ENCODE measurements at regions of chr1 and their contacts with region 1.

Region 1: GRCh38 chr1:32714277-32714676 is 11.7 kb upstream of the SYNC start:
- DNase-seq: no peak
- ATAC-seq: peak in 1 of 4 donors; percentile 18
- H3K4me3 ChIP-seq: no peak overlapping the region
- H3K27ac ChIP-seq: no peak overlapping the region
- H3K4me1 ChIP-seq: peaks cover 0 to 4% (median 0%) of the 10 kb centered on the region in 4 donors
- H3K27me3 ChIP-seq: no peaks in the 10 kb centered on the region
- CTCF ChIP-seq: no peak
- POLR2A ChIP-seq: no peak

Region 2: DNA sequence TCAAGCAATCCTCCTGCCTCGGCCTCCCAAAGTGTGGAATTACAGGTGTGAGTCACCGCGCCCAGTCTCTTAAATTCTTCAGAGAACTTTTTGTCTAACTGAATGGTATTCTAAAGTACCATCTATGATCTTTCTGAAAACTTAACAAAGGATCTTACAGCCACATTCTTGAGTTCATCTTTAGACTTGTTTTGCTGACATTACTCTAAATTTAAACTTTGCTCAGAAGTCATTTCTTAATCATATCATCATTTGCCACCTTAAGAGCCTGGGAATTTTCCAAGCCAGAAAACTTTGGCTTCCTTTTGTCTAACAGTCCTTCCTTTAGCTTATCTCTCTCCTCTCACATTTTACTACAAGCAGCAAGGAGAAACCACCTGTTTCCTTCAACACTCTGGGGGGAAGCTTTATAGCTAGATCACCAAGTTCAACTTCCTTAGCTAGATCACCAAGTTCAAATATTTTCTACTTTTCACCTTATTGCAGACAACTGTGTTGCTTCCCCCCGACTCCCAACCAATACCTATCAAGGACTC is 180.4 kb before region 1 on chr1:
- intact Hi-C with region 1: no loop called
- DNase-seq: no peak
- ATAC-seq: peak in 2 of 4 donors; percentile 39 to 67
- H3K4me3 ChIP-seq: no peak overlapping the region
- H3K27ac ChIP-seq: no peak overlapping the region
- H3K4me1 ChIP-seq: no peaks in the 10 kb centered on the region
- H3K27me3 ChIP-seq: no peaks in the 10 kb centered on the region
- CTCF ChIP-seq: no peak
- POLR2A ChIP-seq: no peak

Region 3: DNA sequence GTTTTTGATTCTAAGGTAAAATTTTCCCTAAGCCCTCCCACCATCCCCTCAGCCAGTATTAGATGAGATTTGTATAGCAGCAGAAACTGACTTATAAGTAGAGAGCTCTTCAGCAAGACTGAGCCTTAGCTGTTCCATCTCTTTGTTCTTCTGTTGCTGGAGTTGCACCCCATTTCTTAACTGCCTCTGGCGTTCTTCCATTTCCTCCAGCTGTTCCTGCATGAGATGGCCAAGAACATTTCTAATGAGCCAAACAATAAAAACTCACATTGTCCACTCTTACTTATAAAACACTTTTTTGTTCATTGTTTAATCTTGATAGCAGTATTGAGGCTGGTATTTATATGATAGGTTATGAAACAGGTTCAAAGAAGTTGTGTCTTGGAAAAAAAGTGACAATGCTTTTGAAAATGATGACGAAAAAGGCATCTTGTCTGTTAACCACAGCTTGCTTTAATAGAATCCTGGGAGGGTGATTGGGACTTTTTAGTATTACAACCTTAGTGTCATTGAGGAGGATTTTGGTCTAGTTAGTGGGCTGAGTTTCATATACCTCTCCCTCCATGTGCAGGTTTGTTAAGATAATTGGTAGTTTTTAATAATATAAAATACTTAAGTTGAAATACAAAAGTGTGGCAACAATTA is 30.0 kb before region 1 on chr1:
- intact Hi-C with region 1: no loop called
- DNase-seq: no peak
- ATAC-seq: no peak
- H3K4me3 ChIP-seq: no peak overlapping the region
- H3K27ac ChIP-seq: no peak overlapping the region
- H3K4me1 ChIP-seq: peaks cover 0 to 12% (median 0%) of the 10 kb centered on the region in 4 donors
- H3K27me3 ChIP-seq: no peaks in the 10 kb centered on the region
- CTCF ChIP-seq: no peak
- POLR2A ChIP-seq: no peak

Region 4: GRCh38 chr1:32773018-32773763 is 58.9 kb after region 1 on chr1:
- intact Hi-C with region 1: loop called (anchors 5 kb)
- DNase-seq: peak; percentile 79 to 82 (median 81)
- ATAC-seq: peak; percentile 85 to 93 (median 86)
- H3K4me3 ChIP-seq: no peak overlapping the region
- H3K27ac ChIP-seq: no peak overlapping the region
- H3K4me1 ChIP-seq: no peaks in the 10 kb centered on the region
- H3K27me3 ChIP-seq: no peaks in the 10 kb centered on the region
- CTCF ChIP-seq: peak; percentile 91 to 96 (median 94)
- POLR2A ChIP-seq: no peak

Measured in right lobe of liver (tissue), 6 donors.